Activated naive CD4-positive, alpha-beta T cell treated with anti-CD3 and anti-CD28 coated beads, Interleukin-2, amount 10 ng/mL, durations not matched to agents 7 days and 5 days (primary cell): ENCODE measurements at regions of chr3 and their contacts with region 1.

Region 1: DNA sequence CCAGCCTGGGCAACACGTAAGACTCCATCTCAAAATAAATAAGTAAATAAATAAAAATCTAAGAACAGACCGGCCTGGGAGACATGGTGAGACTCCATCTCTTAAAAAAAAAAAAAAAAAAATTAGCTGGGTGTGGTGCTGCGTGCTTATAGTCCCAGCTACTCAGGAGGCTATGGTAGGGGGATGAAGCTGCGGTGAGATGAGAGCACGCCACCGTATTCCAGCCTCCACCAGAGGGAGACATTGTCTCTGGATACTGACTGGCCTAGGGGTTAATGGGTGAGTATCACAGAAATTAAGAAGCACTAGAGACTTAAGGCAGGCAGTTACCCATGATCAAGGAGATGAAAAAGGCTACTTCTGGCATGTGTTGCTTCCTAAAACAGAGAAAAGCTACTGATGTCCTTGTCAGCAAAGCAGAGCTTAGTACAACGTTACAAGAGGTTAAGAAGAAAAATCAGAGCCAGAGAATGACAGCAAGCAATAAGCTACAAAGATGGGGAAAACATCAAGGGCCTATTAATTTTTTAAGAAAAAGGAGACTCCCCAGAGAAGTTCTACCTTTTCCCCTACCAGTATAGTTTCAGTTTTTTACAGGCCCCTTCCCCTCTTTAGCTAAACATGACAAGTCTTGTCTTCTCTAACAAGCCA is 8.6 kb downstream of the TFRC start:
- DNase-seq: peak; percentile 81
- H3K4me3 Mint-ChIP-seq: no peak overlapping the region
- H3K27ac Mint-ChIP-seq: peak overlapping the region; percentile 8
- H3K4me1 Mint-ChIP-seq: peaks cover 32% of the 10 kb centered on the region
- H3K27me3 Mint-ChIP-seq: no peaks in the 10 kb centered on the region

Region 2: GRCh38 chr3:196049567-196050122 is 23.7 kb before region 1 on chr3:
- CTCF ChIA-PET with region 1: interaction called, 12 read pairs
- DNase-seq: no peak
- H3K4me3 Mint-ChIP-seq: no peak overlapping the region
- H3K27ac Mint-ChIP-seq: no peak overlapping the region
- H3K4me1 Mint-ChIP-seq: no peaks in the 10 kb centered on the region
- H3K27me3 Mint-ChIP-seq: no peaks in the 10 kb centered on the region

Region 3: DNA sequence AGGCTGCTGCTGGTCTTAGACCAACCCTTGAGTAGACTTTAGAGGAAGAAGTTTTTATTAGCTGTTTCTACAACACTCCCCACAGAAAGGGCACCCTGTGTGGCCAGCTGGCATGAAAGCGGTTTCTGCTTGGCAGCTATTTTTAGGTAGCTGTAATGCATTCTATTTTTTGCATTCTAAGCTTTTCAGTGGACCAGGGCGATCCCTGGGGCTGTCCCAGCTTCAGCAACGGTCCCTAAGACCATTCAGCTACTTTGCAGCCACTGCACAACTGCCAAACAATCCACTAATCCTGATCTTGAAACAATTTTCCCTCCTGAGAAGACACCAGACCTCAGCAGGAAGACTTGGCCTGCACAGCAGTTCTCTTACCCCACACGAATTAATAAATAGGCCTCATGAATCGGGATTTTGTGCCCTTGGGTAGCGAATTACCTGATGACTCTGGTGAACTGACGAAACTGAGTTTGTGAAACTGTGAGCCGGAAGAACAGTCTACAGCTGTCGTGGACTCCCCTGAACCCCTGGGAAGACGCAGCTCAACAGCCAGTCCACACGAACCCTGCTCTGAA is 23.2 kb after region 1 on chr3:
- CTCF ChIA-PET with region 1: interaction called, 48 read pairs
- DNase-seq: peak; percentile 1
- H3K4me3 Mint-ChIP-seq: no peak overlapping the region
- H3K27ac Mint-ChIP-seq: no peak overlapping the region
- H3K4me1 Mint-ChIP-seq: peaks cover 6% of the 10 kb centered on the region
- H3K27me3 Mint-ChIP-seq: peaks cover 4% of the 10 kb centered on the region

Region 4: DNA sequence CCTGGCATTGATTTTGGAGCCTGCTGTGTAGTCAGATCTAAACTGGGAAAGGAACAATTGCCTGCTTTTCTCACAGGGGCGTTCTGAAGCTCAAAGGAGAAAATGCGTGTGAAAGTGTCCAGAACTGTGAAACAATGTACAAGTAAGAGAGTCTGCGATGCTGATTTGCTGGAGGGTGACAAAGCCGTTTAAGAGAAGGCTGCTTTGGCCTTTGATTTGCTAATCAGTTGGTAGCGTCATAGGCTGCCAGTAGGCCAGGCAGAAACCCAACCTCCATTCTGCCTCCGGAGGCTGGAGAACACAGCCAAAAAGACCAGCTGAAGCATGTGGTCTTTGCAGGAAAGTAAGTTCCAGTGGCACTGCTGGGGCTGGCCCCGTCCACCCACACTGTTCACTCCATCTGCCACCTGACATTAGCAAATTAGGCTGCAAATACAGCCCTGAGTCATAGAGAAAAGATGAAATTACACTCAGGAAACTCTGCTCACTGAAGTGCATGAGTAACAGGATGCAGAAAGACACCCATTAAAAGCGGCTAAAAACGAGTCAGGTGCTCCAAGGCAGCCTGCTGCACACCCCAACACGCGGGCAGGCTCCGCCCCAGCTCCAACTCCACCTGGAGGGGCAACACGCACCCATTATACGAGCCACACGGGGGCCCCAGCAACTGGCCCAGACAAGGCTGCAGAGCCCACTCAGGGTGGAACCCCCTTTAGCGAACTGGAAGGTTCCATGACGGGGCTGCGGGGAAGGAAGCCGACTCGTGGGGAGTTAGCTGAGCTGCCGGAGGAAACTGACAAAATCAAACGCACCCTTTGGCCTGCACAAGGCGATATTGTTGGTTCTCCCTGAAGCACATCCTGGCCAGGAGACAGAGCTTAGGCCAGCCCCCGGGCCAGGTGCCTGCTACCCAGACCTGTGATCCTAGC is 106.3 kb after region 1 on chr3:
- CTCF ChIA-PET with region 1: interaction called, 11 read pairs
- DNase-seq: peak; percentile 91
- H3K4me3 Mint-ChIP-seq: peak overlapping the region; percentile 56
- H3K27ac Mint-ChIP-seq: peak overlapping the region; percentile 98
- H3K4me1 Mint-ChIP-seq: peaks cover 65% of the 10 kb centered on the region
- H3K27me3 Mint-ChIP-seq: no peaks in the 10 kb centered on the region

Region 5: GRCh38 chr3:196192036-196192523 is 118.8 kb after region 1 on chr3:
- CTCF ChIA-PET with region 1: interaction called, 293 read pairs
- DNase-seq: peak; percentile 57
- H3K4me3 Mint-ChIP-seq: no peak overlapping the region
- H3K27ac Mint-ChIP-seq: peak overlapping the region; percentile 92
- H3K4me1 Mint-ChIP-seq: peaks cover 60% of the 10 kb centered on the region
- H3K27me3 Mint-ChIP-seq: no peaks in the 10 kb centered on the region